Transverse colon (tissue), 4 donors: ENCODE measurements at regions of chr17 and their contacts with region 1.

Region 1: DNA sequence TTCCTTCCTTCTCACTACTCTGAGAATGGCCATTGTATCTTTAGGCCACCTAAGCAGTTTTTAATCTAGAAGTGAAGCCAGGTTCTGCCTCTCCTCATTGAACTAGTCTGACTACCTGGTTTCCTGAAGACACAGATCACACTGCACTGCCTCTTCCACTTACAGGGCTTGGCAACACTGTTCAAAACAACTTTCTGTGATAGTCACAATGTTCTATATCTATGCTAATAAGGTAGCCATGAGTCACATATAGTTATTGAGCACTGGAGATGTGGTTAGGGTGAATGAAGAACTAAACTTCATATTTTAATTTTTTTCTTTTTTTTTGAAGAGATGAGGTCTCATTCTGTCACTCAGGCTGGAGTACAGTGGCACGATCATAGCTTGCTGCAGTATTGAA is 26.9 kb downstream of the RND2 start:
- DNase-seq: no peak
- H3K4me3 ChIP-seq: no peak overlapping the region
- H3K27ac ChIP-seq: no peak overlapping the region
- H3K4me1 ChIP-seq: no peaks in the 10 kb centered on the region
- H3K27me3 ChIP-seq: no peaks in the 10 kb centered on the region
- CTCF ChIP-seq: no peak
- EP300 ChIP-seq: no peak
- POLR2A ChIP-seq: no peak

Region 2: DNA sequence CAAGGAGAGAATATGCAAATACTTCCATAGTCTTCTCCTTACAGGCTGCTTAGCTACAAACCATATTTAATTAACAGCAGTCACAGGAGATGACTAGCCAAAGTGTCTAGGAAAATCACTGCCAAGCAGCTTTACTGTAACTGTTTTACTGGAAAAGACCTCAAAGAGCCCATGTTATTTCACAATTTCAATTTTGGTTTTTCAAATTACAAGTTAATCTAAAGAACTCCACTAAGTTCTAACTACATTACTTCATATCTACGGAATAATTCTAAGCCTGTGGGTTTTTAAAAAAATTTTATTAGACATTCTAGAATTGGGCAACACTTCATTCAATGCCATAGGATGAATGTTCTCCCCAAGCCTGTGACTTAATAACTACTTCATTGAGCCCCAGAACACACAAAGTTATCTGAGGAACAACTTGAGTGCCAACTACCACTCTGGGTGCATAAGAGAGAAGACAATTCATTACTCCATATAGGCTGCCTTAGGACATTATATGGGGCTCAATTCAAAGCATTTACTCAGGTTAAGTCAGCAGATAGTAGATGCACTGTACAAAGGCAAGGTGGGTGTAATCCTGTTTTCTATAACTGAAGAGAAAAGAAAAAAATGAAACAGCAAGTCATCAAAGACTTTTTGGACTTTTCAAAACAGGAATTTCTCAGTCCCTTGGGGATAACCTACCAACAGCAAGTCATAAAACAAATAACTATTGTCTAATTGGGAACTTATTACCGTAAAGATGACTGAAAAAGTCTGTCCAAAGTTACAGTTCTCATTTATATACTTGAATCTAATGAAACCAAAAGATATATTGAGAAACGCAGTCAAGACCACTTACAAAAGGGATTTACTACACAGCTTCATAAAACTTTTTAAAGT is 696.8 kb before region 1 on chr17:
- in situ Hi-C with region 1: no loop called
- intact Hi-C with region 1: loop called (anchors 5 kb)
- DNase-seq: no peak
- H3K4me3 ChIP-seq: no peak overlapping the region
- H3K27ac ChIP-seq: no peak overlapping the region
- H3K4me1 ChIP-seq: peaks cover 0 to 27% (median 8%) of the 10 kb centered on the region in 4 donors
- H3K27me3 ChIP-seq: no peaks in the 10 kb centered on the region
- CTCF ChIP-seq: no peak
- EP300 ChIP-seq: no peak
- POLR2A ChIP-seq: no peak